Tibial artery (tissue), 4 donors: ENCODE measurements at regions of chr17 and their contacts with region 1.

Region 1: GRCh38 chr17:42679492-42680330 is 1.9 kb downstream of the CCR10 start:
- DNase-seq: peak; percentile 67 to 89
- H3K4me3 ChIP-seq: peak overlapping the region; percentile 70 to 100
- H3K27ac ChIP-seq: peak overlapping the region; percentile 88 to 94
- H3K4me1 ChIP-seq: peaks cover 0 to 77% (median 57%) of the 10 kb centered on the region in 4 donors
- H3K27me3 ChIP-seq: no peaks in the 10 kb centered on the region
- CTCF ChIP-seq: peak; percentile 90 to 96

Region 2: DNA sequence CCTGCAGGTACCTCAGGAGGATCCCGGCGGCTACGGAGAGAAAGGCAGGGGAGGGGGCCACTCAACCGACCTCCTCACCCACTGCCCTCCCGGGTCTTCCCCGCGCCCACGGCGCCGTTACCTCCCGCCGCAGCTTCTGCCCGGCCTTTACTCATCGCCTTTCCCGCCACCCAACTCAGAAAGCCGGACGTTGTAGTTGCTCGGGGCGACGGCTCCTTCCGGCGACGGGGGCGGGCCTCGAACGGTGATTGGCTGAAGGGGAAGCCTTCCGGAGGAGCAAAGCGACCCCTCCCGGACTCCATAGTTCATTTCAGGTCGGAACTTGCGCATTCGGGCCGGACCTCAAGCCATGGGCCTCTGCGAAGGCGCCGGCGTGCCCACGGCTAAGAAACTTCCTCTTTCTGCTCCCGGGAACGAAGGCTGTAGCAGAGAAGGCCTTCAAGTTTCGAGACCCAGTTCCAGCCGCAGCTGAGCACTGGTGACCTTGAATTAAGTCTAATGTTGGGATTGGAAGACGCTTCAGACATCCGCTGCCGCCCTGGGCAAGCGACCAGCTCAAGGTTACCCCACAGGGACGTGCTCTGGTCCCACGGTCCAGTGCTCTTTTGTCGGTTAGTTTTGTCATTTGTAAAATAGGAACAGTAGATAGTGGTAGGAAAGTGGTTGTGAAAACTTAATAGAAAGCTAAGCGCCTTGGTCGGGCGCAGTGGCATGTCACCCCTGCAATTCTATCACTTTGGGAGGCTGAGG is 102.0 kb before region 1 on chr17 and contains the start of gene PSMC3IP:
- intact Hi-C with region 1: loop called (anchors 1 kb)
- DNase-seq: peak; percentile 96 to 97
- H3K4me3 ChIP-seq: peak within 1 kb of the TSS; percentile 57 to 61
- H3K27ac ChIP-seq: peak within 1 kb of the TSS; percentile 78 to 89
- H3K4me1 ChIP-seq: peaks cover 0 to 21% (median 19%) of the 10 kb centered on the region in 4 donors
- H3K27me3 ChIP-seq: no peaks in the 10 kb centered on the region
- CTCF ChIP-seq: peak; percentile 18 to 54

Region 3: DNA sequence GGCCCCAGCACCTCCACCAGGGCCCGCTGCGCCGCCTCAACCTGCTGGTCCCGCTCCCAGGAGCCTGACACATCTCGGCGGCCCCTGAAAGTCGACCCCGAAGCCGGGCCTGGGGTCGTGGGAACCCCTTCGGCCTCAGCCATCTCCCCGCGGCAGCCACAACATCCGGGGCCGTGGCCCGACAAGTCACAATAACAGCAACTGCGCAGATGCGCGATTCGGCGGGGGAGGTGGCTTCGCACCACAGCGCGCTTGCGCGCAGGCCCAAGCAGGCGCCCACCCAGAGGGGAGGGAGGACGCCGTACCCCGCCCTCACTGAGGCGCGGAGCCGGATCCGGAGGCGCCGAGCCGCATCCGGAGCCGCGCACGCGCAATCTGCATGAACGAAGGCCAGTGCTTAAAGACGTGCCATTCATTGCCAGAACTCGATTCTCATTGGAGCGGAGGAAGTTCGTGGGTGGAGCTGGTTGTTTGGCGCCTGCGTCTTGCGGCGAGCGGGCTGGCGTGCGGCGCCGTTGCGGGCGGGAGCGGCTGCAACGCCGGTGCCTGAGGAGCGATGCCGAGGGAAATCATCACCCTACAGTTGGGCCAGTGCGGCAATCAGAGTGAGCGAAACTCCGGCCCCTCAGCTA is 70.4 kb before region 1 on chr17 and contains the starts of genes RETREG3 and TUBG1:
- intact Hi-C with region 1: loop called (anchors 5 kb)
- DNase-seq: peak; percentile 98 to 99
- H3K4me3 ChIP-seq: peak within 1 kb of the TSS; percentile 69 to 85
- H3K27ac ChIP-seq: peak within 1 kb of the TSS; percentile 88 to 95
- H3K4me1 ChIP-seq: peaks cover 0 to 54% (median 33%) of the 10 kb centered on the region in 4 donors
- H3K27me3 ChIP-seq: no peaks in the 10 kb centered on the region
- CTCF ChIP-seq: peak in 1 of 2 experiments; percentile 43